ENCODE measurements at regions of chr13 and their contacts with region 1.

Region 1: DNA sequence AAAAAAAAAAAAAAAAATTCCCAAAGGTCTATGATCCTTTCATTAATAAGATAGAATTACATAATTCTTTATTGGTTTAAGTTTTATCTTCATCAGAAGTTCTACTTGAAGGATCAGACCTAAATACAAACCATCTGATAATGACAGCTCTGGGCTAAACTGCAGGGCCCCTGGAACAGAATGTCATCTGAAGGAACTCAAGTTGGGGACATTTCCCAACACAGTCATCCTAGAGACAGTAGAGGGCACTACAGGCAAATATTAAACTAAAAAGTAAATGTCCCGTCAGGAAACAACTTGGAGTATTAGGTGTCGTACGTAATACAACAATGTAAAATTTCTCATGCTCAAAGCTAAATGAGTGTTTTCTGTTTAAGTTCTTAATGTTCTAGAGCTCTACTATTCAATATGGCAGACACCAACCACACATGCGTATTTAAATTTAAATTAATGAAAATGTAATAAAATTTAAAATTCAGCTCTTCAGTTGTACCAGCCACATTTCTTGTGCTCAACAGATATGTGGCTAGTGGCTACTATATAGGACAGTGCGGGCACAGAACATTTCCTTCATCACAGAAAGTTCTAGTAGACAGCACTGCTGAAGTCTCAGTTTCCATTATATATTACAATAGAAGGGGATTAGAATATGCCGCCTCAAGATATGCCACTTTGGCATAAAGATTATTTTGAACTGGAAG is 21.8 kb upstream of the NAXD start:
- DNase-seq: peak; percentile 27
- ATAC-seq: peak; percentile 82
- H3K4me3 Mint-ChIP-seq: no peak overlapping the region
- H3K27ac Mint-ChIP-seq: no peak overlapping the region
- H3K4me1 Mint-ChIP-seq: no peaks in the 10 kb centered on the region
- H3K27me3 Mint-ChIP-seq: peaks cover 6% of the 10 kb centered on the region
- CTCF ChIP-seq: peak; percentile 64

Region 2: GRCh38 chr13:110455941-110456340 is 137.6 kb before region 1 on chr13:
- CTCF ChIA-PET with region 1: interaction called, 10 read pairs
- POLR2A ChIA-PET with region 1: no interaction called
- intact Hi-C with region 1: no loop called
- DNase-seq: peak; percentile 83
- ATAC-seq: peak; percentile 99
- H3K4me3 Mint-ChIP-seq: peak overlapping the region; percentile 14
- H3K27ac Mint-ChIP-seq: no peak overlapping the region
- H3K4me1 Mint-ChIP-seq: peaks cover 3% of the 10 kb centered on the region
- H3K27me3 Mint-ChIP-seq: peaks cover 26% of the 10 kb centered on the region
- CTCF ChIP-seq: peak; percentile 82

Region 3: DNA sequence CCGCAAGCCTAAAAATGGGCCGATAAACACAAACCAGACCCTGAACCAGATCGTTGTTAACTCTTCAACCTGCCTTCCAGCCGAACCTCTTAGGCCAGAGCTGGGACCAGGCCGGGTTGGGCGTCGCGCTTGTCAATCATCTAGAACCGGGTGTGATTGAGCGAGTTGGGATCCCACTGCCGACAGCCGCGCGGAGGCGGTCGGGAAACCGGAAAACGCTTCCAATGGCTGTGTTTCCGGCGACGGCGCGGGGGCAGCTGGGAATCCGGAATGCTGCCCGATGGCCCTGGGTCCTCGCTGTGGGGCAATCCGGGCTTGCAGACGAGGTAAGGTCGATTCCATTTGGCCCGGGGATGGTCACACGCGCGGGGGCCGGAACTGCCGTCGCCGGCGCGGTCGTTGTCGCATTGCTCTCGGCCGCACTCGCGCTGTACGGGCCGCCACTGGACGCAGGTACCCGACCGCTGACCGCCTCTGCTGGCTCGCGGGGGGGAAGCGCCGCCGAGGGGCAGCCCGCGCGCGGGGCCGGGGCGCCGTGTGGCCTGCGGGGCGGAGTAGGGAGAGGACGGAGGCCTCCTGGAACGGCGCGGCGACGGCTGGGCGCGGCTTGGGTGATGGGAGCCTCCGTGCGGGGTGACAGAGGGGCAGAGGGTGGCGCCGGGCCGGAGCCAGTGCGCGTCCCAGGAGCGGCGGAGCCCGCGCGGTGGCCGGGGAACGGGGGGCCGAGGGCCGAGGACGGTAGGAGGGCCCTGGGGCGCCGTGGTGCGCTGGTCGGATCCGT is 21.9 kb after region 1 on chr13 and contains the start of gene NAXD:
- CTCF ChIA-PET with region 1: interaction called, 11 read pairs
- POLR2A ChIA-PET with region 1: no interaction called
- intact Hi-C with region 1: no loop called
- DNase-seq: peak; percentile 93
- ATAC-seq: peak; percentile 89
- H3K4me3 Mint-ChIP-seq: peak within 1 kb of the TSS; percentile 92
- H3K27ac Mint-ChIP-seq: peak within 1 kb of the TSS; percentile 96
- H3K4me1 Mint-ChIP-seq: peaks cover 44% of the 10 kb centered on the region
- H3K27me3 Mint-ChIP-seq: no peaks in the 10 kb centered on the region
- CTCF ChIP-seq: no peak
- total RNA-seq, gene NAXD: 22.7 to 24.8 TPM

Region 4: DNA sequence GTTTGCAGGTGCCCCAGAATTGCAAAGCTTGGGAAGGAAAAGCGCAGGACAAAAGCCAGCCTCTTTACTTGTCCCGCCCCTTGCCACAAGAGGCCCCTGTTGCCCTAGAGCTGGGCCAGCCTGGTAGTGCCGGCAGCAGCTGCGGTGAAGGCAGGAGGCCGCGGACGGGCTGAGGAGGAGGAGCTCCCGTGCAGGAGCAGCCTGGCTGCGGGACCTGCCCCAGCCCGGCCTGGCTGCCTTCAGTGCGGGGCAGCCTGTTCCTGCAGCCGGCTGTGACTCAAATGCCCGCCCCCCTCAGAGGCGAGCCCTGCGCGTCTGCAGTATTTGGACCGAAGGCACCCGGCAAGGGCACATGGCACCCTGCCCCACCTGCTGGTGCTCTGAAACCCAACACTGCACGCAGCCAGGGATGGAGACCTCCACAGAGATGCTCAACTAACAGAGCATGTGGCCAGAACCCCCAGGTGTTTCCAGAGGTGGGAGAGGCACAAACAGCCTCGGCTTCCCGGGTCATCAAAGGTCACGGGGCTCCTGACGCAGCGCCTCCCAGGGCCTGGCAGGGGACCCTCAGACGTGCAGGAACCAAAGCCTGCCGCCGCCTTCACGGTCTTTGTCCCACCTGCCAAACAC is 51.4 kb after region 1 on chr13:
- CTCF ChIA-PET with region 1: interaction called, 10 read pairs
- POLR2A ChIA-PET with region 1: no interaction called
- intact Hi-C with region 1: no loop called
- DNase-seq: peak; percentile 73
- ATAC-seq: peak; percentile 90
- H3K4me3 Mint-ChIP-seq: no peak overlapping the region
- H3K27ac Mint-ChIP-seq: peak overlapping the region; percentile 15
- H3K4me1 Mint-ChIP-seq: peaks cover 10% of the 10 kb centered on the region
- H3K27me3 Mint-ChIP-seq: no peaks in the 10 kb centered on the region
- CTCF ChIP-seq: peak; percentile 25

Region 5: DNA sequence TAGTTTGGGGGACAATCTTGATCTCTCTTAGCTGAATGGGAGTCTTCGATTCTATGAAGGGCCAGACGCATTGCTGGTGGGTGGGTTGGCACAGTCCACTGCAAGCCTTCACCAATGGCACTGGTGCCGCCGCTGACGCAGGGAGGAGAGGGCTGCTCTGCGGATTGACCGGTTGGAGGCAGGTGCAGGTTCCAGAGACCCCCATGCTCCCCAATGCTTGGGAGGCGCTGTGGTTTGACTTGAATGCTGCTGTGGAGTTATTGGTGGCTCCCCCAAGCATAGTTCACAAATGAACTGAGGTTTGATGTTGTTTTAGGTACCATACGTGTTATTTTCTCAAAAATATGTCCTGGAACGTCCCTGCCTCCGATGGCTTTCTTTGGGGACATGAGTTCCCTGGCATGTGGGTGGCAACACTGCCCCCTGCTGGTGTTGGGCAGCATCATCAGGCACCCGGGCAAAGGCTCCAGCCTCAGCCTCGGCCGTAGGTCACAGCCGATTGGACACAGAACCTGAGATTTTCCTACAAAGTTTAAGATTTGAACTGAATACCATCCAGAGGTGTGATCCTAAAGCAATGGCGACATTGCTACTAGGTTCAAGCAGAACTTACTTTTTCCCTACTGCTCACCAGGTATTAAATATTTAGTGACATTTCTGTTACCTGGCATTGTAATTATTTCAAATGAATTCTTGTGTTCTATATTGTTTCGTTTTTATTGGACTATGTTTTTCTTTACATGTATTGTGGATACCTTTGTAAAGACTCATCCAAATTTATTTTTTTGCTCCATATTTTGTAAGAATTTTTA is 225.8 kb after region 1 on chr13:
- CTCF ChIA-PET with region 1: interaction called, 13 read pairs
- POLR2A ChIA-PET with region 1: no interaction called
- intact Hi-C with region 1: loop called (anchors 2 kb)
- DNase-seq: peak; percentile 83
- ATAC-seq: peak; percentile 93
- H3K4me3 Mint-ChIP-seq: no peak overlapping the region
- H3K27ac Mint-ChIP-seq: no peak overlapping the region
- H3K4me1 Mint-ChIP-seq: peaks cover 12% of the 10 kb centered on the region
- H3K27me3 Mint-ChIP-seq: peaks cover 1% of the 10 kb centered on the region
- CTCF ChIP-seq: peak; percentile 91

Measured in activated CD8-positive, alpha-beta T cell treated with anti-CD3 and anti-CD28 coated beads for 36 hours (primary cell).